Esophagus muscularis mucosa (tissue), 4 donors: ENCODE measurements at regions of chr18 and their contacts with region 1.

Region 1: DNA sequence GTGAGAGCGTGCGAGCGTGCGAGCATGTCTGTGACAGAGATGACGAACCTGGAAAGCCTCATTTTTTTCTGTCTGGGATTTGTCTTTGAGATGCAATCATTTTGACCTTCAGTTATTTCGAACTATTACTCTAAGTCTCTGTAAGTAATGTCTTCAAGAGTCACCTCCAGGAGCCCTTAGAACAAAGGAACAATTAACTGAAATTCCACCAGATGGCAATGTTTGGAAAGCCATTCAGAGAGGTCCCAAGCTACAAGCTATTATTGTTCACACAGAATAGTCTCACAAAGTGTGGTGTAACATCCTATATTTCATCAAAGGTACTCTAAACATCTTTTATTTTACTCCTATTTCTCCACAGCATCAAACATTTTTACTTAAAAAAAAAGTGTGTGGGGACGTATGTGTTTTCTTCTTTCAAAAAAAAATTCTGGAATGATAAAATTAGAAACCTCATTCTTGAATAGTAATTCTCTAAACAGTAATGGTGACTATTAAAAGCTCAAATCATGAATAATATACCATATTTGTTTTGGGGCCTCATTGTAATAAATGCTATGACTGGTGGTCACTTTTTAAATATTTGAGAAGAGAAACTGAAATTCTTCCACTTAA is 35.1 kb upstream of the MAPRE2 start:
- DNase-seq: no peak
- H3K4me3 ChIP-seq: no peak overlapping the region
- H3K27ac ChIP-seq: no peak overlapping the region
- H3K4me1 ChIP-seq: peaks cover 0 to 7% (median 2%) of the 10 kb centered on the region in 4 donors
- H3K27me3 ChIP-seq: no peaks in the 10 kb centered on the region
- CTCF ChIP-seq: peak; percentile 70 to 75 (median 72)
- EP300 ChIP-seq: no peak
- POLR2A ChIP-seq: no peak

Region 2: DNA sequence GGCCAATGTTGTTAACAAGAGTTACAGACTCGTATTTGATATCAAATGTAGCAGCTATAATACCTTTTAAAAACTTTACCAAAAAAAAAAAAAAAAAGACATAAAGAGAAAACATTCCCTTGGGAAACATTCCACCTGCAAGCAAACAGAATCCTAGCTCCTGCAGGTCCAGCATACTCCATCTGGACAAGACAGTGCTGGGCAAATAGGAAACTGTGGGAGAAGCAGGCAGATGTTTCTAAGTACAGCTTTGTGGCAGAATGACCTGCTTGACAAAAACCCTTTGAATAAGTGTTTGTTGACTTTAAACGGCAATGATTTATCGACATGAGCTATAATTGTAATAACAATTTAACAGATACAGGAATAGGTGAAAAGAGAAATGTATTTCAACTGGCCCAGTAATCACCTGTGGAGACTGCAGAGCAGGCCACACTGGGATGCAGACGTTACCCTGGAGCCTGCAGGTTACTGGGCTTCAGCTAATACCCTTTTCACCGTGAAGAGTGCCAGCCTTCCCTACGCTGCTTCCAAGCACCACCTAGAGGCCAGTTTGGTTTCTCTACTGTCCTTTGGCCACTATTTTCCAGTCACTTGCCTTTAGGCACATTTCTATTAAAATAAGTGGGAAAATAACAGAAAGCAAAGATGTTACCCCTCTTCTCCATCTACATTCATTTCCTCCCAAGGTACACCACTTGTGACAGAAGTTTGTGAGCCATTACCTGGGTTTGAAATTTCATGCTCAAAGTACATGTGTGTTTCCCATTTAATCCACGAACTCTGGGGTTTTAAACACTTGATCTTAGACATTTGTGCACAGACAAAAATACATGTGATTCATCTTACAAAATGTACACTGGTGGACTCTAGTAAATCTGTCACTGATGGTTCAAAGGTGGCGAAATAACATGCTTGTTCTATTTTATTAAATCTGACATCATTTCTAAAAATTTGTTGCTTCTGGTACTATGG is 137.8 kb after region 1 on chr18:
- intact Hi-C with region 1: loop called (anchors 1 kb)
- DNase-seq: peak; percentile 31
- H3K4me3 ChIP-seq: no peak overlapping the region
- H3K27ac ChIP-seq: peak overlapping the region in 3 of 4 donors; percentile 12 to 52 (median 28)
- H3K4me1 ChIP-seq: peaks cover 0 to 18% (median 17%) of the 10 kb centered on the region in 4 donors
- H3K27me3 ChIP-seq: no peaks in the 10 kb centered on the region
- CTCF ChIP-seq: peak; percentile 71 to 83 (median 75)
- EP300 ChIP-seq: no peak
- POLR2A ChIP-seq: no peak

Region 3: GRCh38 chr18:35240664-35241447 is 234.8 kb after region 1 on chr18 and contains the start of gene ZNF397:
- intact Hi-C with region 1: loop called (anchors 10 kb)
- DNase-seq: peak; percentile 99
- H3K4me3 ChIP-seq: peak within 1 kb of the TSS; percentile 72 to 79 (median 75)
- H3K27ac ChIP-seq: peak within 1 kb of the TSS; percentile 89 to 99 (median 94)
- H3K4me1 ChIP-seq: peaks cover 10 to 24% (median 22%) of the 10 kb centered on the region in 4 donors
- H3K27me3 ChIP-seq: no peaks in the 10 kb centered on the region
- CTCF ChIP-seq: no peak
- EP300 ChIP-seq: no peak
- POLR2A ChIP-seq: peak; percentile 93
- total RNA-seq, gene ZNF397: 22.2 to 27.8 (median 24.9) TPM

Region 4: GRCh38 chr18:35355140-35355618 is 349.1 kb after region 1 on chr18:
- intact Hi-C with region 1: loop called (anchors 10 kb)
- DNase-seq: no peak
- H3K4me3 ChIP-seq: peak overlapping the region in 2 of 4 donors; percentile 23 to 32
- H3K27ac ChIP-seq: no peak overlapping the region
- H3K4me1 ChIP-seq: peaks cover 0 to 9% (median 0%) of the 10 kb centered on the region in 4 donors
- H3K27me3 ChIP-seq: no peaks in the 10 kb centered on the region
- CTCF ChIP-seq: peak; percentile 66 to 77 (median 70)
- EP300 ChIP-seq: no peak
- POLR2A ChIP-seq: no peak